ENCODE measurements at regions of chr19 and their contacts with region 1.

Region 1: GRCh38 chr19:53982611-53983010 is 8.8 kb upstream of the CACNG6 start:
- DNase-seq: no peak
- ATAC-seq: no peak; the same call in 1 of the 2 replicates
- H3K4me3 ChIP-seq: no peak overlapping the region; a peak in 2 of 4 replicates
- H3K27ac ChIP-seq: no peak overlapping the region; the same call in 1 of the 2 replicates
- H3K4me1 ChIP-seq: peaks cover 16 to 48% of the 10 kb centered on the region in 2 experiments
- H3K27me3 ChIP-seq: no peaks in the 10 kb centered on the region
- CTCF ChIP-seq: no peak
- POLR2A ChIP-seq: no peak
- RAD21 ChIP-seq: no peak

Region 2: GRCh38 chr19:53844849-53845246 is 137.8 kb before region 1 on chr19:
- CTCF ChIA-PET with region 1: interaction called, 4 read pairs
- POLR2A ChIA-PET with region 1: no interaction called
- RAD21 ChIA-PET with region 1: no interaction called
- intact Hi-C with region 1: loop called (anchors 1 kb)
- DNase-seq: no peak
- ATAC-seq: no peak
- H3K4me3 ChIP-seq: no peak overlapping the region
- H3K27ac ChIP-seq: no peak overlapping the region
- H3K4me1 ChIP-seq: peaks cover 14 to 37% of the 10 kb centered on the region in 2 experiments
- H3K27me3 ChIP-seq: no peaks in the 10 kb centered on the region
- CTCF ChIP-seq: no peak
- POLR2A ChIP-seq: no peak
- RAD21 ChIP-seq: no peak

Region 3: GRCh38 chr19:53867225-53868090 is 115.2 kb before region 1 on chr19 and contains the start of gene MYADM:
- CTCF ChIA-PET with region 1: interaction called, 3 read pairs
- POLR2A ChIA-PET with region 1: interaction called, 13 read pairs
- RAD21 ChIA-PET with region 1: interaction called in 1 of 2 experiments, 5 read pairs
- intact Hi-C with region 1: loop called (anchors 5 kb)
- DNase-seq: peak; percentile 95
- ATAC-seq: peak; percentile 59
- H3K4me3 ChIP-seq: peak within 1 kb of the TSS; percentile 75 to 78
- H3K27ac ChIP-seq: peak within 1 kb of the TSS; percentile 80
- H3K4me1 ChIP-seq: peaks cover 18 to 47% of the 10 kb centered on the region in 2 experiments
- H3K27me3 ChIP-seq: no peaks in the 10 kb centered on the region
- CTCF ChIP-seq: no peak
- POLR2A ChIP-seq: peak; percentile 43
- RAD21 ChIP-seq: no peak
- total RNA-seq, gene MYADM: 79.6 TPM

Region 4: GRCh38 chr19:53898636-53899341 is 83.8 kb before region 1 on chr19:
- CTCF ChIA-PET with region 1: no interaction called
- POLR2A ChIA-PET with region 1: no interaction called
- RAD21 ChIA-PET with region 1: no interaction called
- intact Hi-C with region 1: loop called (anchors 5 kb)
- DNase-seq: peak; percentile 77
- ATAC-seq: peak; percentile 93
- H3K4me3 ChIP-seq: 0 out of 4 replicates have a peak overlapping the region, but pooled peaks of 1 of the 2 experiments have one; percentile 16
- H3K27ac ChIP-seq: no peak overlapping the region
- H3K4me1 ChIP-seq: peaks cover 9 to 24% of the 10 kb centered on the region in 2 experiments; a peak in 3 of 4 replicates
- H3K27me3 ChIP-seq: no peaks in the 10 kb centered on the region
- CTCF ChIP-seq: no peak
- POLR2A ChIP-seq: no peak
- RAD21 ChIP-seq: no peak

Region 5: GRCh38 chr19:53917356-53917755 is 65.3 kb before region 1 on chr19:
- CTCF ChIA-PET with region 1: no interaction called
- POLR2A ChIA-PET with region 1: no interaction called
- RAD21 ChIA-PET with region 1: no interaction called
- intact Hi-C with region 1: no loop called
- DNase-seq: no peak
- ATAC-seq: no peak
- H3K4me3 ChIP-seq: no peak overlapping the region
- H3K27ac ChIP-seq: no peak overlapping the region
- H3K4me1 ChIP-seq: no peaks in the 10 kb centered on the region
- H3K27me3 ChIP-seq: no peaks in the 10 kb centered on the region
- CTCF ChIP-seq: no peak
- POLR2A ChIP-seq: no peak
- RAD21 ChIP-seq: no peak

Region 6: GRCh38 chr19:53947624-53948023 is 35.0 kb before region 1 on chr19:
- CTCF ChIA-PET with region 1: interaction called, 13 read pairs
- POLR2A ChIA-PET with region 1: interaction called, 5 read pairs
- RAD21 ChIA-PET with region 1: no interaction called
- intact Hi-C with region 1: no loop called
- DNase-seq: peak; percentile 47
- ATAC-seq: peak; percentile 92
- H3K4me3 ChIP-seq: no peak overlapping the region
- H3K27ac ChIP-seq: no peak overlapping the region
- H3K4me1 ChIP-seq: no peaks in the 10 kb centered on the region
- H3K27me3 ChIP-seq: no peaks in the 10 kb centered on the region
- CTCF ChIP-seq: peak; percentile 32 to 51 (median 47); a peak in 5 of 6 replicates
- POLR2A ChIP-seq: no peak
- RAD21 ChIP-seq: peak; percentile 60

Region 7: DNA sequence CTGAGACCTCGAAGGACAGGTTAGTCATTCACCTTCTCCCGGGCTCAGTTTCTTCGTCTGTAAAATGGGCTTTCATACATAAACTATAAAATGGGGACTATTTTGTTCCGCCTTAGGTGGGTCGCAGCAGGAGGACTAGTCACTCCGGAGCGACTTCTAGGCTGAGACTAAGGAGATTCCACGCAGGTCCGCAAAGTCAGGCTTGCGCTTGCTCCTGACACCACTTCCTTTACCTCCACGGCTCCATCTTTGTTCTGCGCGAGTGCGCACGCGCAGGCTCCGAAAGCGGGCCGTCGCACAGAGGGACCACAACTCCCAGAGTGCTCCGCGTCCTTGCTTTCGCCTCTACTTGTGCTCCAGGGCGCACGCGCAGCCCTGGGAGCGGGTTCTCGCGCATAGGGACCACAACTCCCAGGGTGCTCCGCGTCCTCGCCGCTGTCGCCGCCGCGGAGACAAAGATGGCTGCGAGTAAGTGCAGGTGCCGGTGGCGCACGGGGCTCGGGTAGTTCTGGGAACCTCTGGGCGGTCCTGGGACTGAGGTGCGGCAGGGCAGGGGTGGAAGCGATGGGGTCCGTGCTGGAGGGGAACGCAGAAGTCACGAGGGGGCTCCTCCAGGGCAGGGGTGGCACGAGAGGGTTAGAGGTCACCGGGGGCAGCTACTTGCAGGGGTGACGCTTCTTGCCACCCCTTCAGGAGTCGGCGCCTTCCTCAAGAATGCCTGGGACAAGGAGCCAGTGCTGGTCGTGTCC is 120.0 kb after region 1 on chr19 and contains the start of gene NDUFA3:
- CTCF ChIA-PET with region 1: no interaction called
- POLR2A ChIA-PET with region 1: no interaction called
- RAD21 ChIA-PET with region 1: no interaction called
- intact Hi-C with region 1: no loop called
- DNase-seq: peak; percentile 95
- ATAC-seq: peak; percentile 99
- H3K4me3 ChIP-seq: peak within 1 kb of the TSS; percentile 97 to 98
- H3K27ac ChIP-seq: peak within 1 kb of the TSS; percentile 73
- H3K4me1 ChIP-seq: peaks cover 0 to 5% of the 10 kb centered on the region in 2 experiments; a peak in 1 of 4 replicates
- H3K27me3 ChIP-seq: no peaks in the 10 kb centered on the region
- CTCF ChIP-seq: no peak
- POLR2A ChIP-seq: peak; percentile 13
- RAD21 ChIP-seq: no peak
- total RNA-seq, gene NDUFA3: 149 TPM

Measured in HCT116 (cell line).